ENCODE measurements at regions of chr13 and their contacts with region 1.

Region 1: GRCh38 chr13:102773441-102774215 is at the start of gene TEX30:
- H3K4me3 ChIP-seq: peak within 1 kb of the TSS; percentile 71
- H3K27ac ChIP-seq: peak within 1 kb of the TSS; percentile 69
- H3K4me1 ChIP-seq: peaks cover 3% of the 10 kb centered on the region; the same call in 1 of the 2 replicates
- CTCF ChIP-seq: no peak

Region 2: GRCh38 chr13:102800145-102801041 is 26.8 kb after region 1 on chr13:
- CTCF ChIA-PET with region 1: interaction called, 6 read pairs
- POLR2A ChIA-PET with region 1: interaction called, 12 read pairs
- H3K4me3 ChIP-seq: peak overlapping the region; percentile 94
- H3K27ac ChIP-seq: peak overlapping the region; percentile 72
- H3K4me1 ChIP-seq: no peaks in the 10 kb centered on the region
- CTCF ChIP-seq: peak; percentile 80

Region 3: DNA sequence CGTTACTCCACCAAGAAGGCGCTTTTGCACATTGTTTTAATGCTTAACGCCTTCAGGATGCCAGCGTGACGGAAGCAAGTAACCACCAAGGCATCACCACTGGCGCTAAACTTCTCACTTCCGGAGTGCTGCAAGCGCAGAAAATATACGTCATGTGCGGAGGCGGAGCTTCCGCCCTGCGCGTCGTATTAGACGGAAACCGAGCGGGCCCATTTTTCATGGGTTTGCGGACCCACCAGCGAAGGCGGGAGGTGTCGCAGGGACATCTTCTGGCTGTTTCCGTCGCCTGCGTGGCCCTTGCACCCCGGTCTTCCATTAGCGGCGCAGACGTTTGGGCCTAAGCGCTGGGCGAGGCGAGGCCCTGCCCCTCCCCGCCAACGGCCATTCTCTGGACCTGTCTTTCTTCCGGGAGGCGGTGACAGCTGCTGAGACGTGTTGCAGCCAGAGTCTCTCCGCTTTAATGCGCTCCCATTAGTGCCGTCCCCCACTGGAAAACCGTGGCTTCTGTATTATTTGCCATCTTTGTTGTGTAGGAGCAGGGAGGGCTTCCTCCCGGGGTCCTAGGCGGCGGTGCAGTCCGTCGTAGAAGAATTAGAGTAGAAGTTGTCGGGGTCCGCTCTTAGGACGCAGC is 72.1 kb after region 1 on chr13 and contains the start of gene ERCC5:
- CTCF ChIA-PET with region 1: no interaction called
- POLR2A ChIA-PET with region 1: interaction called, 19 read pairs
- H3K4me3 ChIP-seq: peak within 1 kb of the TSS; percentile 97
- H3K27ac ChIP-seq: peak within 1 kb of the TSS; percentile 72
- H3K4me1 ChIP-seq: no peaks in the 10 kb centered on the region
- CTCF ChIP-seq: no peak; the same call in 1 of the 2 replicates

Region 4: GRCh38 chr13:102873653-102874052 is 100.0 kb after region 1 on chr13:
- CTCF ChIA-PET with region 1: no interaction called
- POLR2A ChIA-PET with region 1: no interaction called
- H3K4me3 ChIP-seq: no peak overlapping the region
- H3K27ac ChIP-seq: no peak overlapping the region
- H3K4me1 ChIP-seq: no peaks in the 10 kb centered on the region
- CTCF ChIP-seq: no peak